Activated CD4-positive, alpha-beta T cell treated with anti-CD3 and anti-CD28 coated beads, Interleukin-2, amount 10 ng/mL, durations not matched to agents 7 days and 5 days (primary cell): ENCODE measurements at regions of chr1 and their contacts with region 1.

Region 1: DNA sequence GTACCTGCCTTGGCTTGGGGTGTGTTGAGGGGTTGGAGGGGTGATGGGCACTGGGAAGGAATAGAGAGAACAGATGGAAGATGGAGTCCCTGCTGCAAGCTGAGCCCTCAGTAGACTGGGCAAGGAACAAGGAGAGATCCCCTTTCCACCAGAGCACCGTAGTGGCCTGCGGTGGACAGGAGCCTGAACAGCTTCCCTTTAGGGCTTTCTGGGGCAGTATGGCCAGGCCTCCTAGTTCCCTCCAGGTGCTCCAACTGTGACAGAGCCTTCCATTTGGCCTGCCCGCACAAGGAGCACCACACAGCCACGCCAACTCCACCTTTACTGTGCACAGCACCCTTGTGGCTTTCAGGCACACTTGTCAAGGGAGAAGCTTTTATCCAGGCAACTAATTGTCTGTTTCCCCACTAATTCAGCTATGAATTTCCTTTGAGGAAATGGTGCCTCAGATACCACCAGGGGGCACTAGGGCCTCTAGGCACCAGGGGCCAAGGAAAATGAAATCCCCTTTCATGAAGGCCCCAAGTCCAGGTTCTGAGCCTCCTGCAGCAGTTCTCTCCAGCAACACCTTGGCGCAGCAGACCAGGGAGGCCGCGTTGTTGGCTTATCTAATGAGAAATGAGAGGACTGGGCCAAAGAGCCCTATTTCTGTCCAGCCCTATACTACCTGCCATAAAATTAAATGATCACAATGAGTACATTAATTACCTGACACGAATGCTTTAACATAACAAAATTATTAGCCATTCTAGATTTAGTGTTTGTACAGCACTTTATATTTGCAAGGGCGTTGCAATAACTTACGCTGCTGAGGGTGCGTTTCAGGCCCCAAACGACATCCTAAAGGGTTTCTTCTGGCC is 23.1 kb upstream of the ERI3 start:
- DNase-seq: peak; percentile 47
- H3K4me3 Mint-ChIP-seq: no peak overlapping the region
- H3K27ac Mint-ChIP-seq: no peak overlapping the region
- H3K4me1 Mint-ChIP-seq: no peaks in the 10 kb centered on the region
- H3K27me3 Mint-ChIP-seq: peaks cover 4% of the 10 kb centered on the region

Region 2: DNA sequence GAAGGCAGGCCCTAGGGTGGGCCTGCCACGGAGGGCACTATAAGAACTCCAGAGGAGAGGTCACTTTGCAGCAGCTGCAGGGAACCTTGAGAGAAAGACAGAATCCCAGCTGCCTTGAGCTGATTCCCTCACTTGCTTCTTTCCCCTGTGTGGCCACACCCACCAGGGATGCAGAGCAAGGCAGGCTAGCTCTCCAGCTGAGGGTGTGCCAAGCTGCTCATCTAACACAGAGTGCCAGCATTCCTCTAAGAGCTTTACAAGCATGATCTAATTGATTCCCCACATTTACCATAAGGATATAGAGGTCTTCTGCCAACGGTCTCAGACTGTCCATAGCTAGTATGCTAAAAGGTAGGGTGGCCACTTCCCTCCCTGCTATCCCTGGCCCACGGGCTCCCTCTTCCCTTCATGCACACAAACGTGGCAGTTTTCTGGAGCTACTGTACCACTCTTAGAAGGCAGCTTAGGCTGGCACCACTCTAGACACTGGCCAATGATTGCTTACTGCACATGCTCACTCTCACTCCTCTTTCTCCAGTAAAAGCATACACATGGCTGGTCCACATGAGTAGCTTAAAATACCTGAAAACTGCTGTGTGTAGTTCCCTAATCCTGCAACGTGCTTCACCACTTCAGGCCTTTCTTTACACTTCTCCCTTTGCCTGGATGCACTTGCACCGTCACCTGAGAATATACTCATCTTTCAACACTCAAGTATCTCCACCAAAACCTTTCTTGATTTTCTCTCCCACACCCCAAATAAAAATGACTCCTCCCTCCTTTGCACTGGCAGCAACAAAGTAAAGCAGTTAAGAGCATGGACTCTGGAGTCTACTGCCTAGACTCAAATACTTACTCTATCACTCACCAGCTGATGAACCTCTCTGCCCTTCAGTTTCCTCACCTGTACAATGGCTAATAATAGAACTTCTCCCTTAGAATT is 107.2 kb before region 1 on chr1:
- CTCF ChIA-PET with region 1: no interaction called
- POLR2A ChIA-PET with region 1: no interaction called
- DNase-seq: no peak
- H3K4me3 Mint-ChIP-seq: no peak overlapping the region
- H3K27ac Mint-ChIP-seq: no peak overlapping the region
- H3K4me1 Mint-ChIP-seq: peaks cover 18% of the 10 kb centered on the region
- H3K27me3 Mint-ChIP-seq: no peaks in the 10 kb centered on the region

Region 3: GRCh38 chr1:44347280-44347679 is 30.9 kb before region 1 on chr1:
- CTCF ChIA-PET with region 1: no interaction called
- POLR2A ChIA-PET with region 1: no interaction called
- DNase-seq: no peak
- H3K4me3 Mint-ChIP-seq: no peak overlapping the region
- H3K27ac Mint-ChIP-seq: no peak overlapping the region
- H3K4me1 Mint-ChIP-seq: no peaks in the 10 kb centered on the region
- H3K27me3 Mint-ChIP-seq: no peaks in the 10 kb centered on the region

Region 4: DNA sequence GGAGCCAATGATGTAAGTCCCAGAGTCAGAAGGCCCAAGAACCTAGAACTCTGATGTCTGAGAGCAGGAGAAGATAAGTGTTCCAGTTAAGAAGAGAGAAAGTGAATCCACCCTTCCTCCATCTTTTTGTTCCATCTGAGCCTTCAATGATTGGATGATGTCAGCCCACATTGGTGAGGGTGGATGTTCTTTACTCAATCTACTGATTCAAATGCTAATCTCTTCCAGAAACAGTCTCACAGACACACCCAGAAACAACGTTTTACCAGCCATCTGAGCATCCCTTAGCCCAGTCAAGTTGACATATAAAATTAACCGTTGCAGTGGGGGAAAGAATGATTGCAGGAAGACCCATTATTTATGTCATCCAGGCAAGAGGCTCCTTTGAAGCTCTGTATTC is 10.4 kb after region 1 on chr1:
- CTCF ChIA-PET with region 1: no interaction called
- POLR2A ChIA-PET with region 1: no interaction called
- DNase-seq: no peak
- H3K4me3 Mint-ChIP-seq: no peak overlapping the region
- H3K27ac Mint-ChIP-seq: no peak overlapping the region
- H3K4me1 Mint-ChIP-seq: no peaks in the 10 kb centered on the region
- H3K27me3 Mint-ChIP-seq: peaks cover 16% of the 10 kb centered on the region

Region 5: DNA sequence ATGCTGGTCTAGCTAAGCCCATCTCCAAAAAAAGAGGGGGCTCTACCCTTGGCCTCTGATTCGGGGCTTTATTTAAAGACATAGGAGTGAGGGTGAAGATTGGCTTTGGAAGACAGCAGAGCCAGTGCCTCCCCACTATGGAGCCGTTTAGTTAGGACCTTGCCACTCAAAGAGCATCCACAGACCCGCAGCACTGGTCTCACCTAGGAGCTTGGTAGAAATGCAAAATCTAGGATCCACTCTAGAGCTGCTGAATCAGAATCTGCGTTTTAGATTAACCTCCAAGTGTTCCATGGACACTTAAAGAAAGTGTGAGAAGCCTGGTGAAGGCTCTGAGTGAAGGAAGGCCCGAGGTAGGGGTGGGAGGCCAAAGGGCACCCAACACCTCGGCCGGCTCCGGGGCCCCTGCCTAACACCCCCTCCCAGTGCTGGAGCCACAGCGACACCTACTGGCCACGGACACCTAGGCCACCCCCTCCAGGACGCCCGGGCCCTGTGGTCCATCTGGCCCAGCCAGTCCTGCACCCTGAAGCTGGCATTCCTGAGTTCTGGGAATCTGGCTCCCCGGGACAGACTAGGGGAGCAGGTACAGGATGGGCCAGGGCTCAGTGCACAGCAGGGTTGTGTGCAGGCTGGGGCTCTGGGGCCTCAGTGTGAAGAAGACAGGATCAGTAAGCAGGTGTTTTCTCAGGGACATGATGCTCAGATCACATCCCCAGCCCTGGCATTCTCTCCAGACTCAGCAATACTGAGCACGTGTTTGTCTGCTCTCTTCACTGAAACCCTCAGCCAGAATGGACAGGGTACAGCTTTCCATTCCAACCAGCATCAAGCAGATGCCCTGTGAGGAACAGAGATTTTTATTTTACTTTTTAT is 217.0 kb after region 1 on chr1:
- CTCF ChIA-PET with region 1: interaction called, 13 read pairs
- POLR2A ChIA-PET with region 1: no interaction called
- DNase-seq: peak; percentile 77
- H3K4me3 Mint-ChIP-seq: no peak overlapping the region
- H3K27ac Mint-ChIP-seq: no peak overlapping the region
- H3K4me1 Mint-ChIP-seq: no peaks in the 10 kb centered on the region
- H3K27me3 Mint-ChIP-seq: peaks cover 3% of the 10 kb centered on the region